ENCODE measurements at regions of chr1 and their contacts with region 1.

Region 1: GRCh38 chr1:52127181-52128180 is 14.4 kb upstream of the ZFYVE9 start:
- DNase-seq: peak in 3 of 5 donors; percentile 16 to 34 (median 25)
- ATAC-seq: peak in 3 of 4 donors; percentile 49 to 60 (median 59)
- H3K4me3 ChIP-seq: no peak overlapping the region
- H3K27ac ChIP-seq: no peak overlapping the region
- H3K4me1 ChIP-seq: no peaks in the 10 kb centered on the region
- H3K27me3 ChIP-seq: peaks cover 0 to 21% (median 0%) of the 10 kb centered on the region in 9 donors
- CTCF ChIP-seq: peak; percentile 56 to 77 (median 68)
- POLR2A ChIP-seq: no peak

Region 2: DNA sequence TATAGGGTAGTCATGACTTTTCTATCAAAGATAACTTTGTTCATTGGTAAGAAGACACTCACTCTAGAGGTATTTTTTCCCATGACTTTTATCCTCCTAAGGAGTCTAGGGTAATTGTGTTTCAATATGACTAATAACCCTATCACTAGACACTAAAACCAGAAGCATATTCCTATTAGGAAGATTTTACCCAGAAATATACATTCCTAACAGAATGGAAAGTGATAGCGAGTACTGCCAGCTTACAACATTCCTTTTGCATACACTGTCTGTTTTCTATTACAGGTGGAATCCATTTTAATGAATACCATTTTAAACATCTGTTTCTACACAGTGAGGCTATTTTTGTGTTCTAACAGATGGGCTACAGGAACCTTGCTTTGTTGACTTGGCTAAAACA is 1056.8 kb before region 1 on chr1:
- intact Hi-C with region 1: no loop called
- DNase-seq: no peak
- ATAC-seq: no peak
- H3K4me3 ChIP-seq: no peak overlapping the region
- H3K27ac ChIP-seq: no peak overlapping the region
- H3K4me1 ChIP-seq: no peaks in the 10 kb centered on the region
- H3K27me3 ChIP-seq: no peaks in the 10 kb centered on the region
- CTCF ChIP-seq: no peak
- POLR2A ChIP-seq: no peak

Region 3: DNA sequence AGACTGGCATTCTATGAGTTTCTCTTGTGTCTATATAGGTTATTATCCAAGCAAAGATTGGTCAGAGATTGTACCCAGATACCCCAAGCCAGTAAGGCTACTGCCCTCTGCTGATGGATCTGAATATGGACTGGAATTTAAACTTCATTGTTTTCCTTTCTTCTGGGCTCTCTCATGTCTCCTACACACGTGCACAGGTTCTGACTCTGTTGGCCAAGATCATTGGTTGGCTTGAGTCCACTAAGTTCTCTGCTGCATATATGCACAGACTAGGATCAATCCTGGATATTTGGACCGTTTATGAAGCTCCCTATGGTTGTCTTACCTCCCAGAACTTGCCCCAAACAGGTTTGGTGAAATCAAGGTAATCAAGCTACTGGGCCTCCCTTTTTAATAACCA is 168.9 kb after region 1 on chr1:
- intact Hi-C with region 1: loop called in 9 of 10 experiments (anchors 2 to 5 kb)
- DNase-seq: no peak
- ATAC-seq: peak in 3 of 4 donors; percentile 59 to 60 (median 59)
- H3K4me3 ChIP-seq: no peak overlapping the region
- H3K27ac ChIP-seq: no peak overlapping the region
- H3K4me1 ChIP-seq: no peaks in the 10 kb centered on the region
- H3K27me3 ChIP-seq: no peaks in the 10 kb centered on the region
- CTCF ChIP-seq: peak; percentile 45 to 73 (median 62)
- POLR2A ChIP-seq: no peak

Region 4: GRCh38 chr1:52348704-52349300 is 221.3 kb after region 1 on chr1:
- intact Hi-C with region 1: loop called in 1 of 10 experiments (anchors 5 kb)
- DNase-seq: peak in 1 of 5 donors; percentile 47
- ATAC-seq: peak; percentile 54 to 75 (median 72)
- H3K4me3 ChIP-seq: no peak overlapping the region
- H3K27ac ChIP-seq: no peak overlapping the region
- H3K4me1 ChIP-seq: peaks cover 0 to 5% (median 0%) of the 10 kb centered on the region in 12 donors
- H3K27me3 ChIP-seq: no peaks in the 10 kb centered on the region
- CTCF ChIP-seq: peak in 8 of 12 donors; percentile 5 to 39 (median 21)
- POLR2A ChIP-seq: no peak

Region 5: DNA sequence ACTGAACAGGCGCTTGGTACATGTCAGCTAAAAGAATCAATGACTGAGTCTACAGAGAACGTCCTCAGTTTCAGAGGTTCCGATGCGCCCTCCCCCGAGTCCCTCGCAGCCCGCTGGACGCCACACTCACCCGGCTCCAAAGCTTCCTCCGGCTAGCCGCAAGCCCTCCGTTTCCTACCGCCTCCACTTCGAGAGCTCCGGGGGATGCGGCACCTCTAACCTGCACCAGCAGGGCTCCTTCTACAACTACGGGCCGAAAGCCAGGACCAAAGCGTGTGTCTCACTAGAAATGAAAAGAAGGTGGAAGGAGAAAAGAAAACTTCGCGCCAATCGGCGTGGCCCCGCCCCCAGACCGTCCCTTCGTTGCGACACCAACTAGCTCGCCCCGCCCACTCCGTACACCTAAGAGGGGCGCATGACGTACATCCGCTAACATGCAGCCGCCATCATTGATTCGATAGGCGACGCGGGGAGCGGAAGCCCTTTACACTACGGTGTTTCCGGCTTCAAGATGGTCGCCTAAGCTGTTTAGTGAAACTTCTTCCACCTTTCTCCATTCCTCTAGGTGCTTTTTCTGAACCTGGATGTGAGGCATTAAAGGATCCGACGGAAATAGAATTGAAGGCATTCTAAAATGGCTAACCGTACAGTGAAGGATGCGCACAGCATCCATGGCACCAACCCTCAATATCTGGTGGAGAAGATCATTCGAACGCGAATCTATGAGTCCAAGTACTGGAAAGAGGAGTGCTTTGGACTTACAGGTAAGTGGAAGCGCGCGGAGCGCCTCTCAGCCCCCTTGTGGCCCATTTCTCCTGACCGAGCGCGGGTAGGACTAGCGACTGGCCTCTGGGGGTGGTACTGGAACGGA is 276.9 kb after region 1 on chr1 and contains the starts of genes ORC1 and PRPF38A:
- intact Hi-C with region 1: loop called in 1 of 10 experiments (anchors 5 kb)
- DNase-seq: peak; percentile 96 to 98 (median 97)
- ATAC-seq: peak; percentile 100
- H3K4me3 ChIP-seq: peak within 1 kb of the TSS; percentile 64 to 96 (median 88)
- H3K27ac ChIP-seq: peak within 1 kb of the TSS; percentile 65 to 94 (median 85)
- H3K4me1 ChIP-seq: peaks cover 0 to 31% (median 18%) of the 10 kb centered on the region in 12 donors
- H3K27me3 ChIP-seq: no peaks in the 10 kb centered on the region
- CTCF ChIP-seq: peak in 11 of 12 donors; percentile 12 to 54 (median 42)
- POLR2A ChIP-seq: peak in 1 of 2 donors; percentile 48
- total RNA-seq, gene ORC1: 0.09 to 1.4 (median 0.16) TPM in 6 of 9 donors, not detected in the others
- total RNA-seq, gene PRPF38A: 6.6 to 24.7 (median 16.6) TPM

Region 6: DNA sequence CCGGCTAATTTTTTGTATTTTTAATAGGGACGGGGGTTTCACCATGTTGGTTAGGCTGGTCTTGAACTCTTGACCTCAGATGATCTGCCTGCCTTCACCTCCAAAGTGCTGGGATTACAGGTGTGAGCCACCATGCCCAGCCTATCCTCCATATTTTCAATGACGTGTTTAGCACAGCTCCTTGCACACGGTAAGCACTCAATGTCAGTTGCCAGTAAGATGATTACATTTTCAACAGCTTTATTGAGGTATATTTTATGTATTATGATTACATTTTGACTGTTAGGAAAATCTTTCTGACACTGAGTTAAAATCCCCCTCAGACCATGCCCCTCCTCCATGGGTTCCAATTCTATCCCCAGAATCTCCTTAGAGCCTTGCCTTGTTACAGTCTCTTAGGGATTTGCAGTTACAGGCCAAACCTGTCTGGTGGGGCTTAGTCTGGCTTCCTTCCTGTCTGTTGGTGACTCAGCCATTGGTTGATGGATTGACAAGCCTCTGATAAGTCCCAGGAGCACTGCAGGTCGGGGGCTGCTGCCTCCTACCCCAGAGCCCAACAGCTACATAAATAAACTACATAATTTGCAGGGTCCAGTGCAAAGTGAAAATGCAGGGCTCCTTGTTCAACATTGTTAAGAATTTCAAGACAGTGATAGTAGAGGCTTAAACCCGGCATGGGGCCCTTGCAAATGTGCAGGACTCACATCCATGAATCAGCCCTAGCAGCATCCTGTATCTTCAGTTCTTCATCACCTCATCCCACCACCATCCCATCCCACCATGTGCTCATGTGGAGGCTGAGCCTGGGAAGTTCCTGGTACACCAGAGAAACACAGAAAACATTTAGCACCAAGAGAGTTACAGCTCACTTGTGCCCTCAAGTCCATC is 547.3 kb after region 1 on chr1:
- intact Hi-C with region 1: loop called in 1 of 10 experiments (anchors 2 kb)
- DNase-seq: no peak
- ATAC-seq: no peak
- H3K4me3 ChIP-seq: no peak overlapping the region
- H3K27ac ChIP-seq: no peak overlapping the region
- H3K4me1 ChIP-seq: peaks cover 0 to 19% (median 7%) of the 10 kb centered on the region in 12 donors
- H3K27me3 ChIP-seq: no peaks in the 10 kb centered on the region
- CTCF ChIP-seq: no peak
- POLR2A ChIP-seq: no peak